ENCODE measurements at regions of chr9 and their contacts with region 1.

Region 1: DNA sequence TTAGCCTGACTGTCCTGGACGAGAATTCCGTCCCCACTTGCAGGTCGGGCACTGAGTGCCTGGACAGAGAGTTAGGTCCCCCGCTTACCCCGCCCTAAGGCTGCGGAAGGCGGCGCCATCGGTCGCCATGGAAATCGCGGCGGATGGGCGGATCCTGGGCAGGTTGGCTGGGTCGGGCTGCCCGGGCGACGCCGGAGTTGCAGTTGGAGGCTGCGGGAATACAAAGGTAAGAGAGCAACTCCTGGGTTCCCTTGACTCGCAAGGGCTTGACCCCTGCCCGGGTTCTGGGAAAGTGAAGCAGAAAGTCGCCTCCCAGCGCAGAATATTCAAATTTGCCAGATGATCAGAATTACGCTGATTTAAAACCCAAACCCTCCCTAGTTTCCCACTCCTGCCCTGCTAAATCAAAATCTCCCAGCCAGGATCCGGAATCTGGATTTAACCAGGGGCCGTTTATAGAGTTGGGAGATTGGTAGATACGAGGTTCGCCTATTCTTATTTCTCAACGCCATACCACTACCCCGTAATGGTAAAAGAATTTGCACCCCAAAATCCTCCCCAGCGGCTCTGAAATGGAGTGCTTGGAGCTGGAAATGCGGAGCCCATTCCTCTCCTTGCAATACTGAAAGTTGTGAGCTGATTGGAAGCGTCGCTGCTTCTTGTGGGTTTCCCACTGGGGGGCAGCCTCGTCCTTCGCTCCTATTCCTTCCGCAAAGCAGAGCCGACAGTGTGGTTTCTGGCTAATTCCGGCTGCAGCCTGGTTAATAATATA is 156.4 kb upstream of the RASEF start:
- DNase-seq: peak; percentile 77
- ATAC-seq: peak; percentile 96
- H3K4me3 ChIP-seq: peak overlapping the region; percentile 48 to 88 (median 73)
- H3K27ac ChIP-seq: peak overlapping the region; percentile 49
- H3K4me1 ChIP-seq: peaks cover 25% of the 10 kb centered on the region
- H3K27me3 ChIP-seq: no peaks in the 10 kb centered on the region
- CTCF ChIP-seq: peak; percentile 93
- EP300 ChIP-seq: no peak
- POLR2A ChIP-seq: no peak
- RAD21 ChIP-seq: peak; percentile 78

Region 2: DNA sequence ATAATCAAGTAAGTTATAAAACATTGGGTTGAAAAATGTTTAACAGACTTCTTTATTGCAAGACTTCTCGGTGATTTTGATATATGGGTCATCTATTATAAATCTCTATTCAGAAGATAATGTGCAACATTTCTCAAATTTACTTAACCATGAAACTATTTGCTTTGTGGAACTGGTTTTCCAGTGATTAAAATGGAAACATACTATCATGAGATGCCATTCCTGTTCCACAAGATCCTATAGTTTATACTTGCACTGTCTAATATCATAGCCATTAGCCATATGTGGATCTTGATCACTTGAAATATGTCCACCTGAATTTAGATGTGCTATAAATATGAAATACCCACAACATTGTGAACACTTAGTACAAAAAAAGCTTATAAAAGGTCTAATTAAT is 125.4 kb before region 1 on chr9:
- CTCF ChIA-PET with region 1: no interaction called
- POLR2A ChIA-PET with region 1: no interaction called
- in situ Hi-C with region 1: no loop called
- intact Hi-C with region 1: no loop called
- DNase-seq: no peak
- ATAC-seq: no peak
- H3K4me3 ChIP-seq: no peak overlapping the region
- H3K27ac ChIP-seq: no peak overlapping the region
- H3K4me1 ChIP-seq: no peaks in the 10 kb centered on the region
- H3K27me3 ChIP-seq: no peaks in the 10 kb centered on the region
- CTCF ChIP-seq: no peak
- EP300 ChIP-seq: no peak
- POLR2A ChIP-seq: no peak
- RAD21 ChIP-seq: no peak

Region 3: GRCh38 chr9:83182071-83182470 is 37.3 kb before region 1 on chr9:
- CTCF ChIA-PET with region 1: no interaction called
- POLR2A ChIA-PET with region 1: no interaction called
- in situ Hi-C with region 1: no loop called
- intact Hi-C with region 1: loop called (anchors 1 kb)
- DNase-seq: peak; percentile 6
- ATAC-seq: peak; percentile 81
- H3K4me3 ChIP-seq: no peak overlapping the region
- H3K27ac ChIP-seq: no peak overlapping the region
- H3K4me1 ChIP-seq: peaks cover 8% of the 10 kb centered on the region
- H3K27me3 ChIP-seq: peaks cover 0 to 9% of the 10 kb centered on the region in 2 experiments; a peak in 2 of 5 replicates
- CTCF ChIP-seq: no peak
- EP300 ChIP-seq: no peak
- POLR2A ChIP-seq: no peak
- RAD21 ChIP-seq: no peak

Region 4: DNA sequence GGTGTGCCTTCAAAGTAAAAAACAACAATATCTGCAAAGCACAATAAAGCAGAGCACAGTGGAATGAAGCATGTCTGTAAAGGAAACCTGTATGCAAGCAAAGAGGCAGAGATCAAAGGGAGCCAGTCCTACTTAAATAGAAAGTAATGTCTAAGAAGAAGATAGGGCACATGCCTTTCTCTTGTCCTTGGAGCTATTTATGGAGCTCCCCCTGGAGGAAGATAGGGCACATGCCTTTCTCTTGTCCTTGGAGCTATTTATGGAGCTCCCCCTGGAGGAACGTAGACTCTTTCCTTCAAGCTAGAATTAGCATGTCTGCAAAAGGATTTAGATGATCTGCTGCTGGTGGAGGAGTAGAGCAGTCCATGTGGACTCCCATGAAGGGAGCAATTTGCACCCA is 11.7 kb after region 1 on chr9:
- CTCF ChIA-PET with region 1: interaction called, 12 read pairs
- POLR2A ChIA-PET with region 1: interaction called, 5 read pairs
- in situ Hi-C with region 1: no loop called
- intact Hi-C with region 1: no loop called
- DNase-seq: peak; percentile 53
- ATAC-seq: peak; percentile 79
- H3K4me3 ChIP-seq: no peak overlapping the region
- H3K27ac ChIP-seq: no peak overlapping the region
- H3K4me1 ChIP-seq: no peaks in the 10 kb centered on the region
- H3K27me3 ChIP-seq: no peaks in the 10 kb centered on the region
- CTCF ChIP-seq: peak; percentile 54
- EP300 ChIP-seq: no peak
- POLR2A ChIP-seq: no peak
- RAD21 ChIP-seq: no peak

Region 5: GRCh38 chr9:83327323-83327722 is 108.0 kb after region 1 on chr9:
- CTCF ChIA-PET with region 1: no interaction called
- POLR2A ChIA-PET with region 1: no interaction called
- in situ Hi-C with region 1: no loop called
- intact Hi-C with region 1: loop called (anchors 2 kb)
- DNase-seq: peak; percentile 56
- ATAC-seq: peak; percentile 98
- H3K4me3 ChIP-seq: no peak overlapping the region
- H3K27ac ChIP-seq: peak overlapping the region; percentile 47
- H3K4me1 ChIP-seq: peaks cover 16% of the 10 kb centered on the region
- H3K27me3 ChIP-seq: no peaks in the 10 kb centered on the region
- CTCF ChIP-seq: peak; percentile 57
- EP300 ChIP-seq: no peak
- POLR2A ChIP-seq: no peak
- RAD21 ChIP-seq: no peak

Region 6: GRCh38 chr9:83334320-83334719 is 115.0 kb after region 1 on chr9:
- CTCF ChIA-PET with region 1: no interaction called
- POLR2A ChIA-PET with region 1: no interaction called
- in situ Hi-C with region 1: no loop called
- intact Hi-C with region 1: loop called (anchors 2 kb)
- DNase-seq: peak; percentile 64
- ATAC-seq: peak; percentile 92
- H3K4me3 ChIP-seq: no peak overlapping the region
- H3K27ac ChIP-seq: no peak overlapping the region
- H3K4me1 ChIP-seq: no peaks in the 10 kb centered on the region
- H3K27me3 ChIP-seq: no peaks in the 10 kb centered on the region
- CTCF ChIP-seq: peak; percentile 91
- EP300 ChIP-seq: 0 out of 4 replicates have a peak, but pooled peaks of 1 of the 2 experiments have one; percentile 4
- POLR2A ChIP-seq: no peak
- RAD21 ChIP-seq: peak; percentile 93

Region 7: GRCh38 chr9:83538172-83538889 is 319.0 kb after region 1 on chr9 and contains the start of gene FRMD3:
- CTCF ChIA-PET with region 1: interaction called, 3 read pairs
- POLR2A ChIA-PET with region 1: interaction called, 5 read pairs
- in situ Hi-C with region 1: loop called (anchors 5 kb)
- intact Hi-C with region 1: no loop called
- DNase-seq: peak; percentile 73
- ATAC-seq: peak; percentile 98
- H3K4me3 ChIP-seq: peak within 1 kb of the TSS; percentile 72 to 85 (median 77)
- H3K27ac ChIP-seq: peak within 1 kb of the TSS; percentile 57
- H3K4me1 ChIP-seq: peaks cover 38% of the 10 kb centered on the region
- H3K27me3 ChIP-seq: no peaks in the 10 kb centered on the region; a peak in 1 of 5 replicates
- CTCF ChIP-seq: peak; percentile 90
- EP300 ChIP-seq: no peak
- POLR2A ChIP-seq: no peak; a peak in 1 of 4 replicates
- RAD21 ChIP-seq: peak; percentile 91
- total RNA-seq, gene FRMD3: 7.7 and 9.6 TPM in 2 replicates

Region 8: DNA sequence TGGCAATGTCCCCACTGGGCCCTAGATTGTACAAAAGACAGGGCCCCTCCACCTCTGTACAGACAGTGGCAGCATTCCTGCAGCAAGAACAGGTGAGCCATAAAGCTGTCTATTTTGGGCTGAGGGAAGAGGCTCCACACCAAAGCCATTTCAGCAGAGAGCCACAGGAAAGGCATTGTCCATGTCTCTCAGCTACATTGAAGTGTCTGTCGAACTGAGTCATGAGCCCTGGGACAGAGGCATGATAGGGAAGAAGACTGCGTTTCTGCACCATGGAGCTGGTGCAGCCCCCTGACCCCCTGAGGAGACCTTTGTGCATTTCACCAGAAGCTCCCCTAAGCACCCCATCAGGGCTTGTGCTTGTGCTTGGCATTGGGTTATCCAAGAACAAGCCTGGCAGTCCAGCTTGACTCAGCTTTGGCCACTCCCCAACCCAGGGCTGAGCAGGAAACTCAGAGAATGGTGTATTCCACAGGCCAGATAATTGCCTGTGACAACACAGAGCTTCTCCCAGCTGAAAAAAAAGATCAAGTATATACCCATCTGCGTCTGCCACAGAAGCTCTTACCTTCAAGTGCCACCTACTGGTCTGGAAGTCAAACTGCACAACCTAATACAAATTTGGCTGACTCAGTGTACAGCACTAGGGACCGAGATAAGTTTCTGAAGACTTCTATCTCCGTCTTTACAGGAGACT is 324.8 kb after region 1 on chr9:
- CTCF ChIA-PET with region 1: interaction called, 13 read pairs
- POLR2A ChIA-PET with region 1: interaction called, 5 read pairs
- in situ Hi-C with region 1: loop called (anchors 5 kb)
- intact Hi-C with region 1: loop called (anchors 1 kb)
- DNase-seq: peak; percentile 75
- ATAC-seq: peak; percentile 97
- H3K4me3 ChIP-seq: no peak overlapping the region
- H3K27ac ChIP-seq: no peak overlapping the region
- H3K4me1 ChIP-seq: peaks cover 20% of the 10 kb centered on the region
- H3K27me3 ChIP-seq: no peaks in the 10 kb centered on the region
- CTCF ChIP-seq: peak; percentile 92
- EP300 ChIP-seq: no peak
- POLR2A ChIP-seq: no peak
- RAD21 ChIP-seq: peak; percentile 85

Measured in HepG2 (cell line).